ENCODE measurements at regions of chr1 and their contacts with region 1.

Region 1: DNA sequence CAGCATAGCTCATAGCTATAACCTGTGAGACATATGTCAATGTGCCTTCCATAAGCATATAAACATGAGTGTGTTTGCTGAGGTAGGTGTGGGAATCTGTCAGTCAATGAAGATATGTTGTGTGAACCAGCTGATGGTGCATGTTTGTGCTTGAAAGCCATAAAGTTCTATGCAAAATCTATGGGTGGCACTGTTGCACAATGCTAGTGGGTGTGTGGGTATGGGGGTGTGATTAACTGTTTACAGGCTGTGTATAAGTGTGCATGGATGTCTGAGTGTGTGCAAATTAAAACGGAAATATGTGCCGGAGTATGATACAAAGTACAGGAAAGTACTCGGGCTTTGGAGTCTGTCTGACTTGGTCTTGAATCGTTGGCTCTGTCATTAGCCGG is 1.0 kb upstream of the ATP2B4 start:
- DNase-seq: no peak
- H3K4me3 ChIP-seq: no peak overlapping the region
- H3K27ac ChIP-seq: peak overlapping the region; percentile 96
- H3K4me1 ChIP-seq: peaks cover 59% of the 10 kb centered on the region
- H3K27me3 ChIP-seq: no peaks in the 10 kb centered on the region
- CTCF ChIP-seq: peak; percentile 60

Region 2: GRCh38 chr1:201982623-201983379 is 1642.8 kb before region 1 on chr1 and contains the start of gene RNPEP:
- intact Hi-C with region 1: no loop called
- DNase-seq: peak; percentile 80
- H3K4me3 ChIP-seq: peak within 1 kb of the TSS; percentile 89
- H3K27ac ChIP-seq: peak within 1 kb of the TSS; percentile 96
- H3K4me1 ChIP-seq: peaks cover 49% of the 10 kb centered on the region
- H3K27me3 ChIP-seq: no peaks in the 10 kb centered on the region
- CTCF ChIP-seq: peak; percentile 36
- total RNA-seq, gene RNPEP: 16.6 TPM

Region 3: GRCh38 chr1:203504397-203505250 is 121.0 kb before region 1 on chr1:
- intact Hi-C with region 1: loop called (anchors 10 kb)
- DNase-seq: peak; percentile 80
- H3K4me3 ChIP-seq: no peak overlapping the region
- H3K27ac ChIP-seq: no peak overlapping the region
- H3K4me1 ChIP-seq: peaks cover 42% of the 10 kb centered on the region
- H3K27me3 ChIP-seq: no peaks in the 10 kb centered on the region
- CTCF ChIP-seq: peak; percentile 90

Region 4: GRCh38 chr1:203888807-203889251 is 263.2 kb after region 1 on chr1:
- intact Hi-C with region 1: no loop called
- DNase-seq: no peak
- H3K4me3 ChIP-seq: no peak overlapping the region
- H3K27ac ChIP-seq: no peak overlapping the region
- H3K4me1 ChIP-seq: no peaks in the 10 kb centered on the region
- H3K27me3 ChIP-seq: no peaks in the 10 kb centered on the region
- CTCF ChIP-seq: no peak

Measured in left ventricle myocardium inferior (tissue), 1 donor.